Right ventricle myocardium superior (tissue), 1 donor: ENCODE measurements at regions of chr17 and their contacts with region 1.

Region 1: GRCh38 chr17:39153599-39154051 is 2.2 kb upstream of the PLXDC1 start:
- DNase-seq: peak; percentile 93
- ATAC-seq: peak; percentile 90

Region 2: GRCh38 chr17:38982858-38983746 is 170.5 kb before region 1 on chr17:
- intact Hi-C with region 1: loop called (anchors 5 kb)
- DNase-seq: no peak
- ATAC-seq: peak; percentile 77

Region 3: DNA sequence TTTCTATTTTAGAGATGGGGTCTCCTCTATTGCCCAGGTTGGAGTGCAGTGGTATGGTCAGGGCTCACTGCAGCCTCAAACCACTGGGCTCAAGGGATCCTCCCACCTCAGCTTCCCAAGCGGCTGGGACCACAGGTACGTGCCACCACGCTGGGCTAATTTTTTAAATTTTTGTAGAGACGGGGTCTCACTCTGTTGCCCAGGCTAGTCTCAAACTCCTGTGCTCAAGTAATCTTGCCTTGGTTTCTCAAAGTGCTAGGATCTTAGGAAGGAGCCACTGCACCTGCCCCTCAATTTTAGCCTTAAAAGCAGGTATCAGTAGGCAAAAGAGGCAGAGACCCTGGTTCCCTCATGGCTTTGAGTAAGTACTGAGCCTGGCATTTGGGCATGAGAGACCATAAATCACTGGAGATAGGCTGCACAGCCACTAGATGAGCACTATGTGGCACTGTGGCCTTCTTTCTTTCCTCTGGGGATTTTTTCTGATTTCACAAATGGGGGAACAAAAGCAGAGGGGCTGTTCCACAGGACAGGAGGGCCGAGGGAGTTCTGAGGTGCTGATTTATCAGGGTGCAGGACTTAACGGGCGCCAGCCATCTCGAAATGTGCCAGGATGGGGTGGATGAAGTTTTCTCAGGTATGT is 84.4 kb before region 1 on chr17:
- intact Hi-C with region 1: loop called (anchors 5 kb)
- DNase-seq: no peak
- ATAC-seq: peak; percentile 69

Region 4: DNA sequence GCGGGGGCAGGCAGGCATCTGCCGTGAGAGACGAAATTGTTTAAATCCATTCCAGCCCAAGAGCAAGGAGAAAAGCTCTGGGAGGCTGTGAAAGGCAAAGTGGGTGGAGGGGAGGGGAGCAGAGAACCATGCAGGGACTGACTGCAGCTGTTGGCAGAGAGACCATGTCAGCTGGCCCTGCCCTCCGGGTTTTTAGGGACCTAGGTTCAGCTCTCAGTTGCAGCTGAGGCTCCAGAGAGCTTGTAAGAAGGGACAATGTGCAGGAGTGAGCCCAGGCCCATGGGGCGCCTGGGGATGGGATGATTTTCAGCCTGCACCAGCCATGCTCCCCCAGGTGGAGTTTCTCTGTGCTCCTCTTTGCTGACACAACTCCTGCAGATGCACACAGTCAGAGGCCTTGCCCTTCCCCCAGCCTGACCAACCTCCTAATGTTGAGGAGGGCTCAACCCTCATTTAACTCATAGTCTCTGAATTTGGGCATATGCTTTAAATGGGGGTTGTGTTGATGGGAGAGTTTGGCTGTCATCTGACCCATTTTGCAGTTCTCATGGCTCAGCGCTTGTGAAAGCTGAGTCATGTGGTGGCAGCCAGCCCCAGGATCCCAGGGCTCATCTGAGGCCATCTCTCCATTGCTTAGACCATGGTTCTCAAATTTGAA is 73.1 kb before region 1 on chr17:
- intact Hi-C with region 1: no loop called
- DNase-seq: peak; percentile 72
- ATAC-seq: peak; percentile 68